ENCODE measurements at regions of chr10 and their contacts with region 1.

Region 1: GRCh38 chr10:25493122-25494009 is 318.6 kb downstream of the GPR158 start:
- DNase-seq: peak in 2 of 5 donors; percentile 8 to 27
- ATAC-seq: peak; percentile 94 to 99 (median 96)
- H3K4me3 ChIP-seq: no peak overlapping the region
- H3K27ac ChIP-seq: peak overlapping the region in 1 of 12 donors; percentile 48
- H3K4me1 ChIP-seq: no peaks in the 10 kb centered on the region
- H3K27me3 ChIP-seq: no peaks in the 10 kb centered on the region
- CTCF ChIP-seq: no peak
- POLR2A ChIP-seq: no peak

Region 2: DNA sequence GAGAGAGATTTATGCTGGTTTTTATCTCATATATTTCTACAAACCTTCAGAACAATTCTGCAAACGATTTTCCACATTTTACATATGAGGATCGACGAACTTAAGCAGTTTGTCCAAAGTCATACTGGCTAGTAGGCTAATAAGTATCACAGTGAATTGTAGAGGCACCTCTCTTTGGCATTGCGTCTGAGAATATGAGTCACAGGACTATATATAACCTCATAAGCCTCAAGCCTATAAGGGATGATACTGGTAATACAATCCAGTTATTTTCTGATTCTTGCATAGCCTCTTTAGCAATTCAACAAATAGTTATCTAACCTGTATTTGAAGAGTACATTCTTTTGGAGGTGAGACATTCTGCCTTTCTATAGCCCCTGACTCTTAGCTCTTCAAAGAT is 188.8 kb before region 1 on chr10:
- intact Hi-C with region 1: loop called in 1 of 10 experiments (anchors 5 kb)
- DNase-seq: no peak
- ATAC-seq: peak; percentile 73 to 93 (median 88)
- H3K4me3 ChIP-seq: no peak overlapping the region
- H3K27ac ChIP-seq: no peak overlapping the region
- H3K4me1 ChIP-seq: peaks cover 0 to 6% (median 0%) of the 10 kb centered on the region in 12 donors
- H3K27me3 ChIP-seq: no peaks in the 10 kb centered on the region
- CTCF ChIP-seq: no peak
- POLR2A ChIP-seq: no peak

Region 3: DNA sequence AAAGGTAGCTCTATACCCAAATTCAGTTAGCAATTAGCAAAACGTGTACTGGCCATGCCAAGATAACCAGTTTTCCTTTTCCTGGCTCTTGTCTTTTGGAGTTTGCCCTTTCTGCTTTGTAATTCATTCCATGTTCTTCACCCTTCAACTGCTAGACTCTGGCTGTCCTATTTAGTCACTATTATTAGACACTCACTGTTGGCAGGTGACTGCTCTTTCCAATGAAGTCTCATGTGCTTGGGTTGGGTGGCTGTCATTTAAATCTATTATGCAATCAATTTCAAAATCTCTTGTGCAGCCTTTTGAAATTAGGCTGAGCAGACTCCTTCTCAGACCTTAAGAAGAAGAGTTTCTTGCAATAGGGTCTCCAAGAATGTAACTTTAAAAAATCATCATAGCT is 52.1 kb before region 1 on chr10:
- intact Hi-C with region 1: loop called in 1 of 10 experiments (anchors 2 kb)
- DNase-seq: no peak
- ATAC-seq: peak; percentile 95 to 99 (median 96)
- H3K4me3 ChIP-seq: peak overlapping the region in 5 of 12 donors; percentile 4 to 31 (median 16)
- H3K27ac ChIP-seq: peak overlapping the region in 8 of 12 donors; percentile 19 to 65 (median 54)
- H3K4me1 ChIP-seq: peaks cover 0 to 7% (median 0%) of the 10 kb centered on the region in 12 donors
- H3K27me3 ChIP-seq: no peaks in the 10 kb centered on the region
- CTCF ChIP-seq: no peak
- POLR2A ChIP-seq: no peak

Region 4: DNA sequence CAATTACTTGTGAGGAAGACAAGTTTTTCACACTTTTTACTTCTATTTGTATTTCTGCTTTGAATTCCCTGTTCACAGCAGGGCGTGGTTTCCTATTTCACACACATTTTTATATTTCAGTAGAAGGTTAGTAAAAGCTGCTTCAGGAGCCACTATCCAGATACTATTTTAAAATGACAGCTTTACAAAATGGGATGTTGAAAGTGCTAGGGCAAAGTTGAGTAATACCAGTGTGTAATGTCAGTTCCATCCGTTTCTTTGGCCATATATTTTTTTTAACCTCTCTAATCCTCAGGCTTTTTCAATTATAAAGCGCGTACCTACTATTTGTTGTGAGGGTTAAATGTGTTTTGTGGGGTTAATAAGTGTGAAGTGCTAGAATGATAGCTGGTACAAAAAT is 42.0 kb before region 1 on chr10:
- intact Hi-C with region 1: no loop called
- DNase-seq: no peak
- ATAC-seq: no peak
- H3K4me3 ChIP-seq: no peak overlapping the region
- H3K27ac ChIP-seq: no peak overlapping the region
- H3K4me1 ChIP-seq: no peaks in the 10 kb centered on the region
- H3K27me3 ChIP-seq: no peaks in the 10 kb centered on the region
- CTCF ChIP-seq: no peak
- POLR2A ChIP-seq: no peak

Measured in heart left ventricle (tissue), 16 donors.